MCF 10A (cell line): ENCODE measurements at regions of chr1 and their contacts with region 1.

Region 1: GRCh38 chr1:204162231-204163074 is 3.7 kb downstream of the REN start:
- DNase-seq: peak; percentile 95
- H3K4me3 Mint-ChIP-seq: no peak overlapping the region
- H3K27ac Mint-ChIP-seq: no peak overlapping the region
- H3K4me1 Mint-ChIP-seq: peaks cover 6% of the 10 kb centered on the region
- H3K27me3 Mint-ChIP-seq: no peaks in the 10 kb centered on the region
- CTCF ChIP-seq: peak; percentile 100

Region 2: DNA sequence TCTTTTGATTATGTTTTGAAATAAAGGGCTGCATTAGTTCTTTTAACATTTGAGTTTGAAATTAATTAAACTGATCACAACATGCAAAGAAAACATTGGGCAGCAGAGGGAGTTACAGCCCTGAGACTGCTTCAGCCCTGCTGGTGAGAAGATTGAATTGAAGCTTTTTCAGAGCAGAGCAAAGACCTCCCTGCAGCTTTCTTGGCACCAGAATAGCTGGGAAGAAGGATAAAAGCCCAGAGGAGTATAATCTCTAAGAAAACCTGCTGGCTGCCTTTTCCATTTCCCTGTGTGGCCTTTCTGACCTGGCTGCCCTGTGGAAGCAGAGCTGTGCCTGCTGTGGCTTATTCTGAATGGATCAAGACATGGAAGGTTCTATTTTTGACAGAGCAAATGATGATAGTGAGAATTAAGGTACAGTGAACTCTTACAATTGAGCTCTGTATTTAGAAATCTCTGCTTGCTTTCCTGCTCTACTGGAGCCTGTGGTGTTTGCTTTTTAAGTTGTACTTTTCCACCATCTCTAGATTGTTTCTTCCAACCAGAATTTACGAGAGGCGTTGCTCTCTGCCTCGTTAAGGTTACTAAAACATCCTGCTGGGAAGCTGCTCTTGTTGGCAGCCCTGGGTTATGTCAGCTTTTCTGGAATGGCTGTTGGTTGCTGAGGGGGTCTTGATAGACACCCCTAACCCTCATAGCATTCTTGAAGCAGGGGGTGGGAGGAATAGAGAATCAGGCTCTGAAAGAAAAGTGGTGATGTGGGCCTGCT is 291.2 kb before region 1 on chr1:
- CTCF ChIA-PET with region 1: interaction called, 34 read pairs
- POLR2A ChIA-PET with region 1: no interaction called
- intact Hi-C with region 1: no loop called
- DNase-seq: peak; percentile 86
- H3K4me3 Mint-ChIP-seq: no peak overlapping the region
- H3K27ac Mint-ChIP-seq: peak overlapping the region; percentile 74
- H3K4me1 Mint-ChIP-seq: peaks cover 3% of the 10 kb centered on the region
- H3K27me3 Mint-ChIP-seq: no peaks in the 10 kb centered on the region
- CTCF ChIP-seq: peak; percentile 100

Region 3: DNA sequence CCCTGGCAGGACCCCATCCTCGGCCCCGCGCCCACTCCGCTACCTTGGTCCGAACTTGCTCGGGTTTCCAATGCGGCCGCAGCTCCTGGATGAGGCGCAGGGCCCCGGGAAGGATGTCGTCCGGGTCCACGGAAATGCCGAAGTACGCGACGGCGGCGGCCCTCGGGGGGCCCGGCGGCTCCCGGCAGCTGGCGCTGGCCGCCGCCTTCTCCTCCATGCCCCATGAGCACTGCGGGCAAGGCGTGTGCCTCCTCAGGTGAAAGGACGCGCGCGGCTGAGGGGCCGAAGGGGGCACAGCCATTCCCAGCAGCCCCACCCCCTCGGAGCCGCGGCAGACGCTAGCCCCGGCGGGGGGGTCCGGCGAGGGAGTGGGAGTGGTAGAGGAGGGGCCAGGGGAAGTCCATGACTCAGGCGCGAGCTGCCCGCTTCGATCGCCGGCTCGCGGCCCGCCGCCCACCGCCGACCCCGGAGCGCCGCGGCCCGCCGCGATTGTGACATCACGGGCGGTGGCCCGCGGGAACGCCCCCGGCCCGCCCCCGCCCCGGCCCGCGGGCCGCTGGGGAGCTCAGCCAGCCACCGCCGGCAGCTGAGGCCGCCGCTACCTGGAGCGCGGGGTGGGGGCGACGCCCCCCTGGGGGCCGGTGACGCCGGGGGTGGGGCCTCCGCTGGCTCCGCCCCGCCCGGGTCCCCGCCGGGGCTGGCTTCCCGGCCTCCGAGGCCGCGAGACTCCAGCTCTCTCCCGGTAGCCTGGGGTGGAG is 10.7 kb before region 1 on chr1 and contains the start of gene ETNK2:
- CTCF ChIA-PET with region 1: interaction called, 89 read pairs
- POLR2A ChIA-PET with region 1: interaction called, 5 read pairs
- intact Hi-C with region 1: no loop called
- DNase-seq: peak; percentile 36
- H3K4me3 Mint-ChIP-seq: peak within 1 kb of the TSS; percentile 68
- H3K27ac Mint-ChIP-seq: peak within 1 kb of the TSS; percentile 78
- H3K4me1 Mint-ChIP-seq: peaks cover 48% of the 10 kb centered on the region
- H3K27me3 Mint-ChIP-seq: no peaks in the 10 kb centered on the region
- CTCF ChIP-seq: no peak
- total RNA-seq, gene ETNK2: 6.7 and 9.5 TPM in 2 replicates

Region 4: GRCh38 chr1:204207136-204207616 is 44.7 kb after region 1 on chr1:
- CTCF ChIA-PET with region 1: interaction called, 505 read pairs
- POLR2A ChIA-PET with region 1: interaction called, 7 read pairs
- intact Hi-C with region 1: loop called (anchors 1 kb)
- DNase-seq: peak; percentile 76
- H3K4me3 Mint-ChIP-seq: no peak overlapping the region
- H3K27ac Mint-ChIP-seq: no peak overlapping the region
- H3K4me1 Mint-ChIP-seq: no peaks in the 10 kb centered on the region
- H3K27me3 Mint-ChIP-seq: peaks cover 38% of the 10 kb centered on the region
- CTCF ChIP-seq: peak; percentile 99

Region 5: GRCh38 chr1:204257954-204258752 is 95.7 kb after region 1 on chr1:
- CTCF ChIA-PET with region 1: interaction called, 30 read pairs
- POLR2A ChIA-PET with region 1: no interaction called
- intact Hi-C with region 1: loop called (anchors 5 kb)
- DNase-seq: peak; percentile 80
- H3K4me3 Mint-ChIP-seq: no peak overlapping the region
- H3K27ac Mint-ChIP-seq: peak overlapping the region; percentile 49
- H3K4me1 Mint-ChIP-seq: peaks cover 13% of the 10 kb centered on the region
- H3K27me3 Mint-ChIP-seq: no peaks in the 10 kb centered on the region
- CTCF ChIP-seq: peak; percentile 97

Region 6: DNA sequence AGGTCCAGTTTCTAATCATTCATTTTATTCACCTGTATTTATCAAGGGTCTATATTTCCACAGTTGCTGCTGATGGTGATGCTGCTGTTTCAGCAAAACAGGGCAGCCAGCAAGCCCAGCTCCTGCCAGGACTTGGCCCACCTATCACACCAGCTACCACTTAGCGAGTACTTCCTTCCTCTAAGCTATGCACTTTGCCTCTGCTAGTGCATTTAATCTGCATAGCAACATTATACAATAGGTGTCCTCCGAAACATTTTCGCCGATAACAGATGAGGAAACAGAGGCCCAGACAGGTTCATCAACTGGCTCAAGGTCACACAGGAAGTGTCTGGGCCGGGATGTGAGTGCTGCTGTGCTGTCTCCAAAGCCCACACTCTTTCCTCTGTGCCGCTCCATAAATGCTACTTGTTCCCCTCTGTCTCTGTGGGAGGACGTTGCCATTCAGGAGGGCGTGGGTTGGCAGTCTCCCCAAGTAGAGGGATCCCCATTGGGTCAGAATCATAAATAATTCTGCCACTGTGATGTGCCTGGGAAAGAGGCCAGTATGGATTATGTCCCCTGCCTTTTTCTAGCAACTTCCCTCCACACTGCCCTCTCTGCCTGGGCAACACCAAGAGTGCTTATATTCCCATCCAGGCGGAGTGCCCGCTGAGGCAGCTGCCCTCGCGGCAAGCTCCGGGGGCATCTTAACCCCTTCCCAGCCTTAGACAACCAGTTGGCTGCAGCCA is 206.7 kb after region 1 on chr1:
- CTCF ChIA-PET with region 1: interaction called, 312 read pairs
- POLR2A ChIA-PET with region 1: interaction called, 10 read pairs
- intact Hi-C with region 1: no loop called
- DNase-seq: no peak
- H3K4me3 Mint-ChIP-seq: no peak overlapping the region
- H3K27ac Mint-ChIP-seq: no peak overlapping the region
- H3K4me1 Mint-ChIP-seq: no peaks in the 10 kb centered on the region
- H3K27me3 Mint-ChIP-seq: no peaks in the 10 kb centered on the region
- CTCF ChIP-seq: no peak

Region 7: GRCh38 chr1:204499521-204500468 is 337.3 kb after region 1 on chr1:
- CTCF ChIA-PET with region 1: interaction called, 17 read pairs
- POLR2A ChIA-PET with region 1: interaction called, 5 read pairs
- intact Hi-C with region 1: loop called (anchors 2 kb)
- DNase-seq: no peak
- H3K4me3 Mint-ChIP-seq: no peak overlapping the region
- H3K27ac Mint-ChIP-seq: no peak overlapping the region
- H3K4me1 Mint-ChIP-seq: peaks cover 11% of the 10 kb centered on the region
- H3K27me3 Mint-ChIP-seq: peaks cover 25% of the 10 kb centered on the region
- CTCF ChIP-seq: no peak